ENCODE measurements at regions of chr7 and their contacts with region 1.

Region 1: GRCh38 chr7:33932832-33933468 is 27.6 kb downstream of the BMPER start:
- H3K4me3 ChIP-seq: no peak overlapping the region
- H3K27ac ChIP-seq: no peak overlapping the region
- H3K4me1 ChIP-seq: peaks cover 3% of the 10 kb centered on the region; the same call in 1 of the 2 replicates
- CTCF ChIP-seq: 0 out of 2 replicates have a peak, but pooled peaks have one; percentile 21

Region 2: GRCh38 chr7:33243319-33243881 is 689.5 kb before region 1 on chr7:
- CTCF ChIA-PET with region 1: interaction called, 17 read pairs
- POLR2A ChIA-PET with region 1: no interaction called
- H3K4me3 ChIP-seq: no peak overlapping the region
- H3K27ac ChIP-seq: no peak overlapping the region
- H3K4me1 ChIP-seq: no peaks in the 10 kb centered on the region
- CTCF ChIP-seq: no peak

Region 3: GRCh38 chr7:33757562-33758165 is 175.3 kb before region 1 on chr7:
- CTCF ChIA-PET with region 1: interaction called, 17 read pairs
- POLR2A ChIA-PET with region 1: no interaction called
- H3K4me3 ChIP-seq: no peak overlapping the region
- H3K27ac ChIP-seq: no peak overlapping the region
- H3K4me1 ChIP-seq: peaks cover 32% of the 10 kb centered on the region
- CTCF ChIP-seq: no peak

Region 4: GRCh38 chr7:33909318-33909717 is 23.6 kb before region 1 on chr7:
- CTCF ChIA-PET with region 1: interaction called, 30 read pairs
- POLR2A ChIA-PET with region 1: no interaction called
- H3K4me3 ChIP-seq: no peak overlapping the region
- H3K27ac ChIP-seq: no peak overlapping the region
- H3K4me1 ChIP-seq: peaks cover 3% of the 10 kb centered on the region; the same call in 1 of the 2 replicates
- CTCF ChIP-seq: no peak

Region 5: GRCh38 chr7:33946094-33946700 is 13.2 kb after region 1 on chr7:
- CTCF ChIA-PET with region 1: interaction called, 11 read pairs
- POLR2A ChIA-PET with region 1: no interaction called
- H3K4me3 ChIP-seq: no peak overlapping the region
- H3K27ac ChIP-seq: no peak overlapping the region
- H3K4me1 ChIP-seq: no peaks in the 10 kb centered on the region
- CTCF ChIP-seq: no peak

Measured in HEK293 (cell line).